ENCODE measurements at regions of chr12 and their contacts with region 1.

Region 1: GRCh38 chr12:31245822-31246469 is 80.0 kb downstream of the SINHCAF start:
- DNase-seq: peak; percentile 44
- ATAC-seq: peak; percentile 96
- H3K4me3 ChIP-seq: peak overlapping the region; percentile 6 to 31 (median 24); a peak in 2 of 6 replicates
- H3K27ac ChIP-seq: no peak overlapping the region
- H3K4me1 ChIP-seq: peaks cover 13% of the 10 kb centered on the region
- H3K27me3 ChIP-seq: peaks cover 0 to 11% of the 10 kb centered on the region in 2 experiments; a peak in 2 of 5 replicates
- CTCF ChIP-seq: peak; percentile 70
- EP300 ChIP-seq: no peak
- POLR2A ChIP-seq: no peak
- RAD21 ChIP-seq: 0 out of 2 replicates have a peak, but pooled peaks have one; percentile 34

Region 2: GRCh38 chr12:30985814-30986452 is 260.0 kb before region 1 on chr12:
- CTCF ChIA-PET with region 1: no interaction called
- POLR2A ChIA-PET with region 1: no interaction called
- in situ Hi-C with region 1: no loop called
- intact Hi-C with region 1: loop called (anchors 10 kb)
- DNase-seq: peak; percentile 33
- ATAC-seq: peak; percentile 90
- H3K4me3 ChIP-seq: no peak overlapping the region
- H3K27ac ChIP-seq: no peak overlapping the region
- H3K4me1 ChIP-seq: no peaks in the 10 kb centered on the region
- H3K27me3 ChIP-seq: peaks cover 2 to 19% of the 10 kb centered on the region in 2 experiments
- CTCF ChIP-seq: peak; percentile 83
- EP300 ChIP-seq: no peak
- POLR2A ChIP-seq: no peak
- RAD21 ChIP-seq: peak; percentile 72

Region 3: GRCh38 chr12:31117203-31118011 is 128.5 kb before region 1 on chr12:
- CTCF ChIA-PET with region 1: no interaction called
- POLR2A ChIA-PET with region 1: no interaction called
- in situ Hi-C with region 1: no loop called
- intact Hi-C with region 1: loop called (anchors 2 kb)
- DNase-seq: peak; percentile 12
- ATAC-seq: peak; percentile 95
- H3K4me3 ChIP-seq: peak overlapping the region; percentile 30 to 69 (median 36); a peak in 5 of 6 replicates
- H3K27ac ChIP-seq: no peak overlapping the region
- H3K4me1 ChIP-seq: peaks cover 6% of the 10 kb centered on the region; the same call in 1 of the 2 replicates
- H3K27me3 ChIP-seq: no peaks in the 10 kb centered on the region
- CTCF ChIP-seq: peak; percentile 72
- EP300 ChIP-seq: no peak
- POLR2A ChIP-seq: no peak
- RAD21 ChIP-seq: peak; percentile 42; the same call in 1 of the 2 replicates

Region 4: GRCh38 chr12:31629756-31630732 is 384.1 kb after region 1 on chr12:
- CTCF ChIA-PET with region 1: no interaction called
- POLR2A ChIA-PET with region 1: no interaction called
- in situ Hi-C with region 1: loop called (anchors 10 kb)
- intact Hi-C with region 1: loop called (anchors 10 kb)
- DNase-seq: no peak
- ATAC-seq: no peak; the same call in 2 of the 3 replicates
- H3K4me3 ChIP-seq: no peak overlapping the region
- H3K27ac ChIP-seq: no peak overlapping the region
- H3K4me1 ChIP-seq: peaks cover 13% of the 10 kb centered on the region
- H3K27me3 ChIP-seq: no peaks in the 10 kb centered on the region; a peak in 1 of 5 replicates
- CTCF ChIP-seq: no peak
- EP300 ChIP-seq: no peak
- POLR2A ChIP-seq: no peak
- RAD21 ChIP-seq: no peak

Region 5: DNA sequence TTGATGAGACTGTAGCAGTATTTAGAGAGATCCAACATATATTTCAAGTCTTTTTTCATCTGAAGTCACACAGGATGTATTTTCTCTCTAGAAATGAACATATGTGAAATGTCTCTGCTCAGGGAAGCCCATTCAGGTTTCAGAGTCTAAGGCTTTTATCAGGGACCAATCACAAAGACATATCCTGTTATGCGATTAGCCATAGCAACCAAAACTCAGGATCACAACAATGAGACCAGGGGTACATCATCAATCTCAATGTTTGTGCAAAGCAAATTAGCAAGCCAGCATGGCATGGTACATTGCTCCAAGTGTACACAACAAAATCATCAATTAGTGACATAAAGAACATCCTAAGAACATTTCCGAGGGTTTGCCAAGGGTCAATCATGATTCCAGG is 582.1 kb after region 1 on chr12:
- CTCF ChIA-PET with region 1: no interaction called
- POLR2A ChIA-PET with region 1: no interaction called
- in situ Hi-C with region 1: no loop called
- intact Hi-C with region 1: no loop called
- DNase-seq: no peak
- ATAC-seq: no peak
- H3K4me3 ChIP-seq: no peak overlapping the region
- H3K27ac ChIP-seq: no peak overlapping the region
- H3K4me1 ChIP-seq: no peaks in the 10 kb centered on the region
- H3K27me3 ChIP-seq: no peaks in the 10 kb centered on the region
- CTCF ChIP-seq: no peak
- EP300 ChIP-seq: no peak
- POLR2A ChIP-seq: no peak
- RAD21 ChIP-seq: no peak